H1 (cell line): ENCODE measurements at regions of chr1 and their contacts with region 1.

Region 1: DNA sequence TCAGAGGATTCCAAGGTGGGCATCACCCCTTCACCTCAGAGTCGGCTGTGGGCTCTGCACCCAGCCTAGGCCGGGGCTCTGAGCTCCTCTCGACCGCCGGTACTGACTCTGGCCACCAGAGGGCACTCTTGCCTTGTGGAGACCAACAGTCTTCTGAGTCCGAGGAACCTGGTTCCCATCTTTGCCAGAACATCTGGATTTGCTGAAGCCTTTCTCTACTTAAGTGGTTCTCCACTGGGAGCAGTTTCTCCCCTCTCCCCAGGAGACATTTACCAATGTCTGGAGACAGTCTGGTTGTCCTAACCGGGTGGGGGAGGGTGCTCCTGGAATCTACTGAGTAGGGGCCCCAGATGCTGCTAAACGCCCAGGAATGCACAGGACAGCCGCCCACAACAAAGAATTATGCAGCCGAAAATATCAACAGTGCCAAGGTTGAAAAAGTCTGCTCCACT is 9.4 kb downstream of the ETV3L start:
- DNase-seq: peak; percentile 75 to 99
- H3K4me3 ChIP-seq: no peak overlapping the region
- H3K27ac ChIP-seq: no peak overlapping the region
- H3K4me1 ChIP-seq: peaks cover 3 to 5% (median 3%) of the 10 kb centered on the region in 4 experiments; a peak in 5 of 7 replicates
- H3K27me3 ChIP-seq: no peaks in the 10 kb centered on the region; a peak in 2 of 7 replicates
- CTCF ChIP-seq: peak; percentile 92 to 98 (median 97)
- EP300 ChIP-seq: peak in 1 of 2 experiments; percentile 23; a peak in 1 of 3 replicates
- POLR2A ChIP-seq: no peak
- RAD21 ChIP-seq: peak; percentile 99 to 100

Region 2: DNA sequence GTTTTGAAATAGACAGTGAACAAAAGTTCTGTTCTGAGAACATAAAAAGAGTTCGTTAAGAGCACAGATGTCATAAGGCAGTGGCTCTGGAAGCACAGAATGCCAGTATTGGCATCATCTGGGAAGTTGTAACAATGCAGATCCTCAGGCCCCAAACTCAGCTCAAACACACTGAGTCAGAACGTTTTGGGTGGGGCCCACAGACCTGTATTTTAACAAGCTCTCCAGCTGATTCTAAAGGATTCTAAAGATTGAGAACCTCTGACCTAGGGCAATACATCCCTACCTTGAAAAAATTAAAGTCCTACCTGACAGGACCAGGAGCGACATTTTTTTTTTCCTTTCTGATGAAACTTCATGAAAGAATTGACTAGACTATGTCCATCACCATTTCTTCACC is 57.9 kb before region 1 on chr1:
- CTCF ChIA-PET with region 1: no interaction called
- POLR2A ChIA-PET with region 1: no interaction called
- DNase-seq: no peak
- H3K4me3 ChIP-seq: no peak overlapping the region
- H3K27ac ChIP-seq: no peak overlapping the region
- H3K4me1 ChIP-seq: peaks cover 0 to 9% (median 2%) of the 10 kb centered on the region in 4 experiments; a peak in 4 of 7 replicates
- H3K27me3 ChIP-seq: no peaks in the 10 kb centered on the region
- CTCF ChIP-seq: no peak
- EP300 ChIP-seq: no peak
- POLR2A ChIP-seq: no peak
- RAD21 ChIP-seq: no peak

Region 3: DNA sequence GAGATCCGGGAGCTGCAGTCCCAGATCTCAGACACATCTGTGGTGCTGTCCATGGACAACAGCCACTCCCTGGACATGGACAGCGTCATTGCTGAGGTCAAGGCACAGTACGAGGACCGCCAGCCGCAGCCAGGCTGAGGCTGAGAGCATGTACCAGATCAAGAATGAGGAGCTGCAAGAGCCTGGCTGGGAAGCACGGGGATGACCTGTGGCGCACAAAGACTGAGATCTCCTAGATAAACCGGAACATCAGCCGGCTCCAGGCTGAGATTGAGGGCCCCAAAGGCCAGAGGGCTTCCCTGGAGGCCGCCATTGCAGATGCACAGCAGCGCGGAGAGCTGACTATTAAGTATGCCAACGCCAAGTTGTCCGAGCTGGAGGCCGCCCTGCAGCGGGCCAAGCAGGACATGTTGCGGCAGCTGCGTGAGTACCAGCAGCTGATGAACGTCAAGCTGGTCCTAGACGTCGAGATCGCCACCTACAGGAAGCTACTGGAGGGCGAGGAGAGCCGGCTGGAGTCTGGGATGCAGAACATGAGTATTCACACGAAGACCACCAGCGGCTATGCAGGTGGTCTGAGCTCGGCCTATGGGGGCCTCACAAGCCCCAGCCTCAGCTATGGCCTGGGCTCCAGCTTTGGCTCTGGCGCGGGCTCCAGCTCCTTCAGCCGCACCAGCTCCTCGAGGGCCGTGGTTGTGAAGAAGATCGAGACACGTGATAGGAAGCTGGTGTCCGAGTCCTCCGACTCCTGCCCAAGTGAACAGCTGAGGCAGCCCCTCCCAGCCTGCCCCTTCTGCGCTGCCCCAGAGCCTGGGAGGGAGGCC is 16.1 kb before region 1 on chr1:
- CTCF ChIA-PET with region 1: interaction called, 38 read pairs
- POLR2A ChIA-PET with region 1: interaction called, 3 read pairs
- DNase-seq: peak; percentile 54 to 84
- H3K4me3 ChIP-seq: no peak overlapping the region
- H3K27ac ChIP-seq: no peak overlapping the region
- H3K4me1 ChIP-seq: no peaks in the 10 kb centered on the region
- H3K27me3 ChIP-seq: peaks cover 0 to 3% (median 1%) of the 10 kb centered on the region in 4 experiments; a peak in 2 of 7 replicates
- CTCF ChIP-seq: peak; percentile 63 to 82 (median 75)
- EP300 ChIP-seq: no peak
- POLR2A ChIP-seq: no peak
- RAD21 ChIP-seq: peak; percentile 57 to 69

Region 4: DNA sequence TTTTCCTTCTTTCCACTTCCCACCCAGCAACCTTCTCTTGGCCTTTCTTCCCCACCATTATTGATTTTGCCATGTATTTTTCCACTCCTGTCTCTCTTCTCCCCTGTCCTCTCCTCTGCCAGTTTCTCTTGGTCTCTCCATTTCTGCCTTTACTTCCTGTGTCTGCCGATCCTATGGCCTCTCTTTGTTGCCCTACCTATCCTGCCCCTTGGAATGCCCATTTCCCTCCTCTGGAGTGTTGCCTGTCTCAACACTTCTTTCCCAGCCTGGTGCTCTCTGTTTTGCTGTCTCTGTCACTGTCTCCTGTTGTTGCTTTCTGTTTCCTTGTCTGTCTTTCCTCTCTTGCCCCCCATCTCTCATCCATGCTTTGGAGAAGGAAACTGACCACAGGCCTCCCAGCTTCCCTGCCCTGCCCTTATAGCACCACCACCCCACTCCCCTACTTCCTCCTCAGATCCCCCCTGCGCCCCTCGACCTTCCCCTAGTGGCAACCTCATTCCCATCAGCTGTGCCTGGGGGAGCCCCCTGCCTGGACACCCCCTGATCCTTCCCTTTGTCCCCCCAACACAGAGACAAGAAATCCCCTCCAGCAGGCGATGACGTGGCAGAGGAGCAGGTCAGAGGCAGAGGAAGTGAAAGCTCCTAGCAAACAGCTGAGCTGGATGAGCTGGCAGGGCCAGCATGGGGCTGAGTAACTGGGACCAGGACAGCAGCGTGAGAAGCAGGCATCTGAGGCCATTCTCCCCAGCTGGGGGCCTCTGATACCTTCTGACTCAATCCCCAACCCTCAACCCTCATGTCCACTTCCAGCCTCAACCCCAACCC is 16.0 kb after region 1 on chr1:
- CTCF ChIA-PET with region 1: interaction called, 67 read pairs
- POLR2A ChIA-PET with region 1: no interaction called
- DNase-seq: no peak
- H3K4me3 ChIP-seq: no peak overlapping the region
- H3K27ac ChIP-seq: no peak overlapping the region
- H3K4me1 ChIP-seq: peaks cover 0 to 7% (median under 1%) of the 10 kb centered on the region in 4 experiments; a peak in 4 of 7 replicates
- H3K27me3 ChIP-seq: peaks cover 0 to 3% (median 1%) of the 10 kb centered on the region in 4 experiments; a peak in 3 of 7 replicates
- CTCF ChIP-seq: no peak
- EP300 ChIP-seq: no peak
- POLR2A ChIP-seq: no peak
- RAD21 ChIP-seq: no peak

Region 5: DNA sequence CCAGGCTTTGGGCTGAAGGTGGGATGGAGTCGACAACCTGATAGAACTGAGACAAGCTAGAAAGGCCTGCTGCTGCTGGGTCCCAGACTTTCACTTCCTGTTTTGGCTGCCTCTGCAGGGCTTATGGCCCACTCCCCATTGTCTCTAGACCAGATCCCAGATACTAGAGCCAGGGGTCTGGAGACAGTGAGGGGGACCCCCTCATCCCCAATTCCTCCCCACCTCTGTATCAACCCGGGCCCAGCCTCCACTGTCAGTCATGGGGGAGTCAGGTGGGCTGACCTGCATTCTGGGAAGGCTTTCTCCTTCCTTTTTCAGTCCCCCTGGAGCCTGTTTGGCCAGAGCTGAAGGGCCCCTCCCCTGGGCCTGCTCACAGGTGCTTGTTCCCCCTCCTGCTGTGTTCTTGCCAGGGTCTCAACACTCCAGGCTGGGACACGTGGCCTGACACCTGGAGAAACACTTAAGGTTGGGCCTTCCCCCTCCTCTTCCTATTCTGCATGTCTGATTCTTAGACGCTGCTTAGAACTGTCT is 27.4 kb after region 1 on chr1:
- CTCF ChIA-PET with region 1: interaction called, 67 read pairs
- POLR2A ChIA-PET with region 1: interaction called, 12 read pairs
- DNase-seq: peak in 1 of 2 experiments; percentile 52
- H3K4me3 ChIP-seq: no peak overlapping the region
- H3K27ac ChIP-seq: no peak overlapping the region; the same call in 1 of the 2 replicates
- H3K4me1 ChIP-seq: peaks cover 18 to 42% (median 27%) of the 10 kb centered on the region in 4 experiments
- H3K27me3 ChIP-seq: peaks cover 0 to 3% (median under 1%) of the 10 kb centered on the region in 4 experiments; a peak in 4 of 7 replicates
- CTCF ChIP-seq: no peak
- EP300 ChIP-seq: no peak
- POLR2A ChIP-seq: no peak
- RAD21 ChIP-seq: no peak

Region 6: GRCh38 chr1:157124855-157125254 is 34.6 kb after region 1 on chr1:
- CTCF ChIA-PET with region 1: interaction called, 25 read pairs
- POLR2A ChIA-PET with region 1: interaction called, 3 read pairs
- DNase-seq: no peak
- H3K4me3 ChIP-seq: no peak overlapping the region
- H3K27ac ChIP-seq: no peak overlapping the region
- H3K4me1 ChIP-seq: peaks cover 0 to 6% (median 0%) of the 10 kb centered on the region in 4 experiments; a peak in 1 of 7 replicates
- H3K27me3 ChIP-seq: no peaks in the 10 kb centered on the region
- CTCF ChIP-seq: peak in 2 of 3 experiments; percentile 30 to 31; a peak in 2 of 4 replicates
- EP300 ChIP-seq: no peak
- POLR2A ChIP-seq: no peak
- RAD21 ChIP-seq: no peak; a peak in 1 of 4 replicates

Region 7: GRCh38 chr1:157138220-157139051 is 48.2 kb after region 1 on chr1 and contains the start of gene ETV3:
- CTCF ChIA-PET with region 1: interaction called, 71 read pairs
- POLR2A ChIA-PET with region 1: interaction called, 4 read pairs
- DNase-seq: peak; percentile 70 to 89
- H3K4me3 ChIP-seq: peak within 1 kb of the TSS; percentile 68 to 99 (median 94)
- H3K27ac ChIP-seq: peak within 1 kb of the TSS; percentile 87
- H3K4me1 ChIP-seq: peaks cover 2 to 17% (median 7%) of the 10 kb centered on the region in 4 experiments; a peak in 4 of 7 replicates
- H3K27me3 ChIP-seq: no peaks in the 10 kb centered on the region
- CTCF ChIP-seq: no peak
- EP300 ChIP-seq: peak in 1 of 2 experiments; percentile 24; a peak in 1 of 3 replicates
- POLR2A ChIP-seq: peak in 1 of 2 experiments; percentile 71; a peak in 1 of 3 replicates
- RAD21 ChIP-seq: no peak
- total RNA-seq, gene ETV3: 23.8 and 26.6 TPM in 2 replicates

Region 8: DNA sequence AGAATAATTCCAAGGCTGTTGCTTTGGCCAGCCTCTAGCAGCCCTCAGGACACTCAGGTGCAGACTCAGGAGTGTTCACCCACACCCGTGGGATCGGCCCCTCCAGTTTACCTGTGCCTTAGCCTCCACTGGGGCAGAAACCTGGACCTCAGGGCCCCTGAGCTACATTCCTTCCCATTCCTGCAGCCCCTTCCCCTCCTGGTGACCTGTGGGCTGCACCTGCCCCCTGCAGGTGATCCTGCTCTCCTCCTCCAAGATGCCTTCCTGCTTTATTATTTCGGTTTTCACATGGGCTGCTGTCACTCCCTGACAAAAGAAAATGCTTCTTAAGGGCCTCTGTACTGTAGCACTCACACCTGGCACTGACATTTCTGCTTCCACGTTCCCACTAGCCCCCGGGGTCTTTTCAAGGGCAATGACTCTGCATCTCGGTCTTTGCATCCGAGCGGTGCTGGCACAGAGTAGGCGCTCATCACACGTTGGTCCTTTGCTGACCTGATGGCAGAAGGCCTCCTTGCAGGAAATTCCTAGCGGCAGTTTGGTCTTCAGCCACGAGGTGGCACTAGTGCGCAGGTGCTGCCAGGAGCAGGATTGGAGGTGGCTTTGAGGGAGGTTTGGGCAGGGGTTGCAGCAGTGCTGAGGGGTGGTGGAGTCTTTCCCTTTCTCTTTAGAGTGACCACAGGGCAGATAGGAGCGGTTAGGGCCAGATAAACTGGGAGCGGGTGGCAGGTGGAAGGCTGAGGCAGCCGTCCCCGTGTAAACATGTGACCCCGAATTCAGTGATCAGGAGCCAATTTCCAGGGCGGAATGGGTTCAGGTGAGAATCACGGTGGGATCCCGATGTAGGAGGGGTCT is 73.3 kb after region 1 on chr1:
- CTCF ChIA-PET with region 1: interaction called, 218 read pairs
- POLR2A ChIA-PET with region 1: interaction called, 3 read pairs
- DNase-seq: peak; percentile 86 to 100
- H3K4me3 ChIP-seq: peak overlapping the region in 2 of 4 experiments; percentile 17 to 43; a peak in 2 of 8 replicates
- H3K27ac ChIP-seq: peak overlapping the region; percentile 55; the same call in 1 of the 2 replicates
- H3K4me1 ChIP-seq: peaks cover 11 to 19% (median 16%) of the 10 kb centered on the region in 4 experiments
- H3K27me3 ChIP-seq: no peaks in the 10 kb centered on the region
- CTCF ChIP-seq: peak; percentile 93 to 98 (median 95)
- EP300 ChIP-seq: no peak
- POLR2A ChIP-seq: 0 out of 3 replicates have a peak, but pooled peaks of 1 of the 2 experiments have one; percentile 14
- RAD21 ChIP-seq: peak; percentile 60 to 74